ENCODE measurements at regions of chr14 and their contacts with region 1.

Region 1: DNA sequence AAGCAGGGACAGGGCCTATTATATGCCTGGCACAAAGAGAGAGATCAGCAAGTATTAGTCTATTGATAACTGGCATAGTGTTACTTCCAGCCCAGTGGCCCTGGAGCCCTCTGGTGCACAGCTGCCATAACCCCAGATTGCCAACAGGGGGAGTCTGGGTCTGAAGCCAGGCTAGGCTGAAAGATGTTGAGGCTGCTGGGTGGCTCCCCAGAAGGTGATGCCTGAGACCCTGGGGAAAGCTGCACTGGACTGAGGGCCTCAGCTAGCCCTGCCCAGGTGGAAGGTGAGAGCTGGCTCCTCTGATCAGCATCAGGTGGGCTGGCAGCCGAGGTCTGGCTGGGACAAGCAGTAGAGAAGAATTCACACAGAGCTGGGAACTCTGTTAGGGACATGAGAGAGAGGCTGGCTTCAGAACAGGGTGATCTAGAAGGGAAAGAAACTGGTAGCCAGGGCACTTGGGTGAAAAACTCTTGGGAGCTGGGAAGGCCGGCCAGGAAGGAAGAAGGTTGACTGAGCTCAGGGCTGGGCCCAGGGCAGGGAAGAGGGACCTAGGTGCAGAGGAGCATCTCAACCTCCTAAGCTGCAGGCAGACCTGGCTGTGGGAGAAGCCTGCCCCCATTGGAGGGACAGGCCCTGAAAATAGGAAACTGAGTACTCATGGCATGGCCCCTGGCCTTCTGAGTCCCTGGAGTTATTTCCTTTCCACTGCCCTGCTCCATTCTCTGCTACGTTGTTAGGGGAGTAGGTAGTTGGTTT is 3.9 kb downstream of the GZMH start:
- DNase-seq: peak; percentile 73
- ATAC-seq: peak; percentile 93
- H3K4me3 ChIP-seq: no peak overlapping the region
- H3K4me3 Mint-ChIP-seq: no peak overlapping the region
- H3K27ac ChIP-seq: no peak overlapping the region
- H3K27ac Mint-ChIP-seq: peak overlapping the region; percentile 57
- H3K4me1 ChIP-seq: peaks cover 25 to 27% of the 10 kb centered on the region in 2 donors
- H3K4me1 Mint-ChIP-seq: peaks cover 36% of the 10 kb centered on the region
- H3K27me3 ChIP-seq: no peaks in the 10 kb centered on the region
- H3K27me3 Mint-ChIP-seq: peaks cover 13% of the 10 kb centered on the region
- CTCF ChIP-seq: peak; percentile 92

Region 2: DNA sequence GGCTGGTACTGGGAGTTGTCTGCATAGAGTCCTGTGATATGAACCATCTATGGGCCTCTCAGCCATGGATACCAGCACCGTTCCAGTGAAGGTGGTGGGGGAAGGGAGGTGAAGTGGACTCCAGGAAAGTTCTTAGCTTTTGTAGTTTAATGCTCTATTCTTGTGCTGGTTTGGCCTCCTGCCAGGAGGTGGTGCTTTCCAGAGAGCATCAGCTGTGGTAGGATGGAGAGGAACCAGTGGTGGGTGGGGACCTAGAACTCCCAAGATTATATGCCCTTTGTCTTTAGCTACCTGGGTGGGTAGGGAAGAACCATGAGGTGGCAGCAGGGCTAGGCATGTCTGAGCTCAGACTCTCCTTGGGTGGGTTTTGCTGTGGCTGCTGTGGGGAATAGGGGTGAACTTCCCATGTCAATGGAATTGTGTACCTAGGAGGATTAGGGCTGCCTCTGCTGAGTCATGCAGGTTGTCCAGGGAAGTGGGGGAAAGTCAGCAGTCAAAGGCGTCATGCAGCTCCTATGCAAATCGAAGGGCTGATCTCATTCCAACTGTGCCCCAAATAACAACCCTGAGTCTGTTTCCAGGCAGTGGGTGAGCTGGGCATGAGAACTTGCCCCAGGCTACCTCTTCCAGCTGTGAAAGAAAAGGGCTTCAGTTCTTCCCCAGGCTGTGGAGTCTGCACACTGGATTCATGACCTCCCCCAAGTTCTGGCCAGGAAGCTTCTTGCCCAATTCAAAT is 10.4 kb before region 1 on chr14:
- CTCF ChIA-PET with region 1: interaction called, 10 read pairs
- POLR2A ChIA-PET with region 1: no interaction called
- intact Hi-C with region 1: no loop called
- DNase-seq: no peak
- ATAC-seq: no peak
- H3K4me3 ChIP-seq: no peak overlapping the region
- H3K4me3 Mint-ChIP-seq: no peak overlapping the region
- H3K27ac ChIP-seq: no peak overlapping the region
- H3K27ac Mint-ChIP-seq: no peak overlapping the region
- H3K4me1 ChIP-seq: no peaks in the 10 kb centered on the region
- H3K4me1 Mint-ChIP-seq: no peaks in the 10 kb centered on the region
- H3K27me3 ChIP-seq: peaks cover 0 to 9% (median 1%) of the 10 kb centered on the region in 4 experiments
- H3K27me3 Mint-ChIP-seq: peaks cover 36% of the 10 kb centered on the region
- CTCF ChIP-seq: no peak

Region 3: GRCh38 chr14:24673534-24674203 is 68.1 kb after region 1 on chr14:
- CTCF ChIA-PET with region 1: interaction called, 74 read pairs
- POLR2A ChIA-PET with region 1: no interaction called
- intact Hi-C with region 1: no loop called
- DNase-seq: no peak
- ATAC-seq: peak; percentile 59
- H3K4me3 ChIP-seq: peak overlapping the region in 4 of 5 experiments; percentile 21 to 66 (median 26)
- H3K4me3 Mint-ChIP-seq: peak overlapping the region; percentile 90
- H3K27ac ChIP-seq: peak overlapping the region; percentile 77 to 89
- H3K27ac Mint-ChIP-seq: peak overlapping the region; percentile 99
- H3K4me1 ChIP-seq: peaks cover 44 to 50% of the 10 kb centered on the region in 2 donors
- H3K4me1 Mint-ChIP-seq: peaks cover 63% of the 10 kb centered on the region
- H3K27me3 ChIP-seq: no peaks in the 10 kb centered on the region
- H3K27me3 Mint-ChIP-seq: no peaks in the 10 kb centered on the region
- CTCF ChIP-seq: no peak

Region 4: DNA sequence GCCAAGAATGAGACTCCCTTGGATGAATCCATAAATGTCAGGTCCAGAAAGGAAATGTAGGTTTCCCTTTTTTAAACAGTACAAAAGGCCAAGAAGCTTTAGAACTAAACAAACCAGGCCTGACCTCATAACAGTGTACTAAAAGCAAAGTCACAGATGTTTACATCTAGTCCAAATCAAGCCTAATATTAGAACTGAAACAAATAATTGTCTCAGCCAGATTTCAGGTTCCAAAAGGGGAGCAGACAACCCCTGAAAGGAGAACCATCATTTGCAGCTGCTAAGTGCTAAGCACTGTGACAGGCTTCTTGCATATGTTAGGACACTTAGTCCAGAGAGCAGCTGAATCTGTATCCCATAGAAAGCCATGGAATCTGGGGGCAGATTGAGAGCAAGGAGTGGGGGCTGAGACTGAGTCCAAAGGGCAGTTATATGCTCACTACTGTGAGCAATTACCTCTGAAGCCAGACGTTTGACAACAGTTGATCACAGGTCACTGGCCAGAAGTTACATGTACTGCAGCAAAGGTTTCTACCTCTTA is 354.2 kb after region 1 on chr14:
- CTCF ChIA-PET with region 1: no interaction called
- POLR2A ChIA-PET with region 1: no interaction called
- intact Hi-C with region 1: no loop called
- DNase-seq: no peak
- ATAC-seq: no peak
- H3K4me3 ChIP-seq: no peak overlapping the region
- H3K4me3 Mint-ChIP-seq: no peak overlapping the region
- H3K27ac ChIP-seq: no peak overlapping the region
- H3K27ac Mint-ChIP-seq: no peak overlapping the region
- H3K4me1 ChIP-seq: no peaks in the 10 kb centered on the region
- H3K4me1 Mint-ChIP-seq: no peaks in the 10 kb centered on the region
- H3K27me3 ChIP-seq: no peaks in the 10 kb centered on the region
- H3K27me3 Mint-ChIP-seq: peaks cover 7% of the 10 kb centered on the region
- CTCF ChIP-seq: no peak

Measured in B cell (primary cell).